ENCODE measurements at regions of chr3 and their contacts with region 1.

Region 1: DNA sequence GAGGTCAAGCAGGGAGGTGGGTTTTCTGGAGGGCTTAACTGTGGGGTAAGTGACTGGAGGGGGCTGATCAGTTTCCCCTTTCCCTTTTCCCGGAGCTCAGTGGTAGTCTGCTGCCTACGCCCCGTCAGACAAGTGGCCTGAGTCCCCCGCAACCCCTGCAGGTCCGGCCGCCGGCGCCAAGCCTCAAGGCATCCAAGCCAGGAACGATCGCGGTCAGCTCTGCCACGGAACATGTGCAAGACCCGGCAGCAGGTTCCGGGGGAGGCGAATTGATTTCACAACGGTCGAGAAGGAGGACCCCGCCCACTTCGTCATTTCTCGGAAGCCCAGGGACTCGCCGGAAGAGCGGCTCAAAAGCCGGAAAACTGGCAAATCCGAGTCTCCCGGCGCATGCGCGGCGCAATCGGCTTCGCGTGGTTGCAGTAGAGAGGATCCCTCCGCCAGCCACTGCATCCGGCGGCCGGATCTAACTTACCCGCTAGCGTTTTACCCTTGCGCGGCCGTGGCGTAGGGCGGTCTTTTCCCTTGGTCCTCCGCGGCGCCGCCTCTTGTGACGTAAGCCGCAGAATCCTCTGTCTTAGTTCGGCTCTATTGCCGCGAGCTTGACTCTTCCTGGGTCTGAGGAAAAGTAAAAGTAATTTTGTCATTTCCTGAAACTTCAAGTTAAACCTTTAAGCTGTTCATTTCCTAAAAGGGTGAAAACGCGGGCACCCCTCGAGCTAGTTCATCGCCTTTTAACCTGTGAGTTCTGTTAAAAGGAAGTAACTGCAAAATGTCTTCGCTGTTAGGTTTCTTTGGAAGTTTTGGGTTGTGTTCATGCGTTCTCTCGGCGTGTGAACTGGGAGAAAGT is 14.9 kb upstream of the CCNL1 start:
- DNase-seq: peak; percentile 100
- H3K4me3 ChIP-seq: peak overlapping the region; percentile 50 to 74 (median 60)
- H3K27ac ChIP-seq: peak overlapping the region; percentile 90 to 97 (median 96)
- H3K4me1 ChIP-seq: peaks cover 0 to 24% (median 19%) of the 10 kb centered on the region in 4 donors
- H3K27me3 ChIP-seq: no peaks in the 10 kb centered on the region
- CTCF ChIP-seq: no peak
- EP300 ChIP-seq: peak; percentile 44 to 98 (median 78)
- POLR2A ChIP-seq: peak; percentile 91 to 96

Region 2: GRCh38 chr3:156948402-156949210 is 226.3 kb before region 1 on chr3:
- intact Hi-C with region 1: no loop called
- DNase-seq: no peak
- H3K4me3 ChIP-seq: no peak overlapping the region
- H3K27ac ChIP-seq: no peak overlapping the region
- H3K4me1 ChIP-seq: no peaks in the 10 kb centered on the region
- H3K27me3 ChIP-seq: no peaks in the 10 kb centered on the region
- CTCF ChIP-seq: no peak
- EP300 ChIP-seq: no peak
- POLR2A ChIP-seq: no peak

Region 3: DNA sequence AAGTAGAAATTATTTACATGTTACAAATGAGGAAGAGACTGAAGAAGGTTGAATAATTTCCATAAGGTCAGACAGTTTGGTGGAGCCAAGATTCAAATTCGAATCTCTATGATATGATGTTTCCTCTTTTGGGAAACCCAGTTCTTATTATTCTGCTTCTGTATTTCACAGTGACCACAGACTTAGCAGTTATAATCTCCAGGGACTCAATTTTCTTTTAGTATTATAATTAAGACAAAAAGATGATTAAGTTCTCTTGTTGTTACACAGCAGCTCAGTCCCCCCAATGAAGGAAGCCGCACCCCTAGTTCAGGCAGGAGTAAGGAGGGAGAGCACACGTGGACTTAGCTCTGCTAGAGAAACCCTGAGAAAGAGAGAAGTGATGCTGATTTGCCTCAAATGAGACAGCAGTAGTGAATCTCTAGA is 145.5 kb before region 1 on chr3:
- intact Hi-C with region 1: no loop called
- DNase-seq: no peak
- H3K4me3 ChIP-seq: no peak overlapping the region
- H3K27ac ChIP-seq: no peak overlapping the region
- H3K4me1 ChIP-seq: no peaks in the 10 kb centered on the region
- H3K27me3 ChIP-seq: no peaks in the 10 kb centered on the region
- CTCF ChIP-seq: no peak
- EP300 ChIP-seq: no peak
- POLR2A ChIP-seq: no peak

Region 4: DNA sequence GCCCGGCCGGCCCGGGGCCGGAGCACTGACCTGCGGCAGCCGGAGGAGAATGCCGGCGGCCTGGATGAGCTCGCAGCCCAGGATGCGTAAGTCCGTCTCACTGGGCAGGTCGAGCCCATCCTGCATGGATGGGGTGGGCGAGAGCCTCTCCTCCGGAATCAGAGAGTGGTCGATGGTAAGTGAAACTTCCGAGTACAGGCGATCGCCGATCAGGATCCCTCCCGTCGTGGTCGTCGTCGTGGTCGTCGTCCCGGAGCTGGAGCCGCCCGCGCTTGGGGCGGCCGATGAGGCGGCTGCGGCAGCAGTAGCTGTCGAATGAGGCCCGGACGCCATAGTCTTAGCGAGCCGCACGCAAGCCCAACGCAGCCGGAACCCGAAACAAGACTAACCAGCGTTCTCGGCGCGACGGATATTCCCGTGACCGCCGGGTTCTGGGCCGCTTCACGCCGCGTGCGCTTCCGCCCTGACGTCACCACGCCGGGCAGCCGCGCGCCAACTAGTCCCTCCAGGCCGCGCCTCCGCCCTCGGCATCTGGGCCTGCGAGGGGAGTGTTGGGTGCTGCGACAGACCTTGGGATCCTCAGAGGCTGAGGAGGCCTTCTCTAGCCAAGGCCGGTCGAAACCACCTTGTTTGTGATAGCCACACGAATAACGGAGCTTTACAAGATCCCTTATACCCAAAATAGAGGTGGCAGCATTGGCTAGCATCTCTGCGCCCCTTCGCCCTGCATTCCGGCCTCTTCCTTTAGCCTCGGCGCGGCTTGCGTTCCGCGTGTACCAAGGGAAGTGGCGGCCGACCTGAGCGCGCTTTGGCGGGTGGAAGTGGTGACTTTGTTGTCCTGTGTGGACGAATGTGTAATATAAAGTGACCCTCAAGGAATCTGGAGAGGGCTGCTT is 14.9 kb before region 1 on chr3 and contains the start of gene CCNL1:
- intact Hi-C with region 1: loop called (anchors 1 kb)
- DNase-seq: peak; percentile 99
- H3K4me3 ChIP-seq: peak within 1 kb of the TSS; percentile 78 to 99 (median 88)
- H3K27ac ChIP-seq: peak within 1 kb of the TSS; percentile 96 to 100 (median 100)
- H3K4me1 ChIP-seq: peaks cover 4 to 50% (median 48%) of the 10 kb centered on the region in 4 donors
- H3K27me3 ChIP-seq: no peaks in the 10 kb centered on the region
- CTCF ChIP-seq: no peak
- EP300 ChIP-seq: peak in 3 of 4 donors; percentile 46 to 97 (median 90)
- POLR2A ChIP-seq: peak; percentile 99
- total RNA-seq, gene CCNL1: 110 to 403 (median 215) TPM

Region 5: DNA sequence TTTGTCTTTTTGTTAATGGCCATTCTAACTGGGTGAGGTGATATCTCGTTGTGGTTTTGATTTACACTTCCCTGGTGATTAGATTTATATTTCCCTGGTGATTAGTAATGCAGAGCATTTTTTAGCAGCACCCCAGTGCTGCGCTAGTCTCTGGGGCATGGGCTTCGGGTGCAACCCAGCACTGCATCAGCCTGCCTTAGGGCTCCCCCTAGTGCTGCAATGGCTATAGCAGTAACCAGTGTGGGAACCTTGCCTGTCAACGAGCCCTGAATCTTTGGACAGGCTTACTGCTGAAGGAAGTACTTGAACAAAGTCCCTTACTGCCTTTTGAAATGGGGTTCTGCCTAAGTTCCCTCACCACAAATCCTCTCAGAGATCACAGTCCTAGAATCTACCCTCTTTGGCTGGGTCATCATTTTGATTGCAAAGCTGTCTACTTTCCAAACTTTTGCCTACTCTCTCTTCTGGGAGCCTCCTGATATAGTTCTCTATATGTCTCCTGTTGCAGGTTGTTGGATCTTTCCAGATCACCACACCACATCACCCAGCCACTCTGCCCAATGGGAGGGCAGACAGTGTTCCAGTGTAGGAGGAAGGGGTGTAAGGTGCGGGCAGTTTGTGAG is 64.3 kb after region 1 on chr3:
- intact Hi-C with region 1: loop called (anchors 1 kb)
- DNase-seq: peak; percentile 77
- H3K4me3 ChIP-seq: no peak overlapping the region
- H3K27ac ChIP-seq: peak overlapping the region in 3 of 4 donors; percentile 12 to 67 (median 55)
- H3K4me1 ChIP-seq: peaks cover 0 to 25% (median 19%) of the 10 kb centered on the region in 4 donors
- H3K27me3 ChIP-seq: no peaks in the 10 kb centered on the region
- CTCF ChIP-seq: peak; percentile 39 to 66 (median 56)
- EP300 ChIP-seq: no peak
- POLR2A ChIP-seq: no peak